Activated naive CD4-positive, alpha-beta T cell treated with anti-CD3 and anti-CD28 coated beads for 36 hours (primary cell): ENCODE measurements at regions of chr7 and their contacts with region 1.

Region 1: GRCh38 chr7:149261829-149262617 is at the start of gene ZNF783:
- DNase-seq: peak; percentile 85
- H3K4me3 Mint-ChIP-seq: peak within 1 kb of the TSS; percentile 75
- H3K27ac Mint-ChIP-seq: peak within 1 kb of the TSS; percentile 74
- H3K4me1 Mint-ChIP-seq: peaks cover 29% of the 10 kb centered on the region
- H3K27me3 Mint-ChIP-seq: no peaks in the 10 kb centered on the region
- total RNA-seq, gene ZNF783: 6.8 to 7.1 TPM

Region 2: GRCh38 chr7:149171892-149172533 is 90.0 kb before region 1 on chr7:
- CTCF ChIA-PET with region 1: no interaction called
- intact Hi-C with region 1: no loop called
- DNase-seq: no peak
- H3K4me3 Mint-ChIP-seq: no peak overlapping the region
- H3K27ac Mint-ChIP-seq: peak overlapping the region; percentile 56
- H3K4me1 Mint-ChIP-seq: no peaks in the 10 kb centered on the region
- H3K27me3 Mint-ChIP-seq: no peaks in the 10 kb centered on the region

Region 3: DNA sequence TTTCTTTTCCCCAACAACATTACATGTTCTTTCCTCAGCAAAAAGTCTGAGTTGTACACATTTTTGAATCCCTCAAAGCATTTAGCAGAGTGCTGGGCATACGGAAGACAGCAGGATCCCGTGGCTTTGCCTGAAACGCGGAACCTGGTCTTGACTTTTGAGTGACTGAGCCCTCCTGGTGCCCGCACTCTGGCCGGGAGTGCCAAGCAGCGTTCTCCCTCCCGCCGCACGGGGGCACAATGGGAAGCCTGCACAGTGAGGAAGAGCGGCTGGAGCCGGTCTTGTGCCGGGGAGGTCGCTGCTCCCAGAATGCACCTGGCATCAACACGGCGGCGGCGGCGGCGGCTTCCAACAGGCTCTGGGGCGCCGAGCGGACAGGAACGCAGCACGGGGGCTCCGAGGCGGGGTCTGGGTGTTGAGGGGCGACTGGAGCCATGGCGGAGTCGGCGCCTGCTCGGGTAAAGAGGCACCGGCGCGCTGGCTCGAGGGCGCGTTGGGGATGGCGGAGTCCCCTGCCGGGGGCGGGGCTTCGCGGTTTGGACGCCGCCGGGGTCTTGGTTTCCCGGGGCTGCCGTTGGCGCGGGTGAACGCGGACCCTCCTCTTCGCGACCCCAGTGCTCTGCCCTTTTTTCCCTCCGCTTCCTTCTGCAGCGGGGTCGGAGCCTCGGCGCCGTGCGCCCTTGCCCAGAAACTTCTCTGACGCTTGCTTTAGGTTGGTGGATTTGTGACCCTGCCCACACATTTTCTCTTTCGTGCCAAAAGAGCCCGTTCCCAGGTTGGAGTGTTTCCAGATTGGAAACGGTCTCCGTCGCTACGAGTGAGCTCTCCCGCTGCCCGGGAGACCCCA is 22.5 kb before region 1 on chr7 and contains the start of gene ZNF212:
- CTCF ChIA-PET with region 1: interaction called, 5 read pairs
- intact Hi-C with region 1: loop called (anchors 1 kb)
- DNase-seq: peak; percentile 93
- H3K4me3 Mint-ChIP-seq: peak within 1 kb of the TSS; percentile 89
- H3K27ac Mint-ChIP-seq: peak within 1 kb of the TSS; percentile 90
- H3K4me1 Mint-ChIP-seq: peaks cover 38% of the 10 kb centered on the region
- H3K27me3 Mint-ChIP-seq: no peaks in the 10 kb centered on the region
- total RNA-seq, gene ZNF212: 9.0 to 10.4 TPM

Region 4: GRCh38 chr7:149310113-149310836 is 48.3 kb after region 1 on chr7:
- CTCF ChIA-PET with region 1: interaction called, 3 read pairs
- intact Hi-C with region 1: loop called (anchors 2 kb)
- DNase-seq: no peak
- H3K4me3 Mint-ChIP-seq: no peak overlapping the region
- H3K27ac Mint-ChIP-seq: no peak overlapping the region
- H3K4me1 Mint-ChIP-seq: peaks cover 2% of the 10 kb centered on the region
- H3K27me3 Mint-ChIP-seq: no peaks in the 10 kb centered on the region

Region 5: GRCh38 chr7:149460493-149461277 is 198.7 kb after region 1 on chr7 and contains the start of gene ZNF777:
- CTCF ChIA-PET with region 1: no interaction called
- intact Hi-C with region 1: loop called (anchors 2 kb)
- DNase-seq: peak; percentile 85
- H3K4me3 Mint-ChIP-seq: peak within 1 kb of the TSS; percentile 80
- H3K27ac Mint-ChIP-seq: peak within 1 kb of the TSS; percentile 59
- H3K4me1 Mint-ChIP-seq: peaks cover 22% of the 10 kb centered on the region
- H3K27me3 Mint-ChIP-seq: peaks cover 3% of the 10 kb centered on the region
- total RNA-seq, gene ZNF777: 8.7 to 9.7 TPM